Posterior vena cava (tissue), 2 donors: ENCODE measurements at regions of chr3 and their contacts with region 1.

Region 1: GRCh38 chr3:24004171-24004938 is 59.3 kb downstream of the NR1D2 start:
- DNase-seq: no peak

Region 2: GRCh38 chr3:23865595-23866450 is 138.5 kb before region 1 on chr3:
- intact Hi-C with region 1: no loop called
- DNase-seq: no peak

Region 3: DNA sequence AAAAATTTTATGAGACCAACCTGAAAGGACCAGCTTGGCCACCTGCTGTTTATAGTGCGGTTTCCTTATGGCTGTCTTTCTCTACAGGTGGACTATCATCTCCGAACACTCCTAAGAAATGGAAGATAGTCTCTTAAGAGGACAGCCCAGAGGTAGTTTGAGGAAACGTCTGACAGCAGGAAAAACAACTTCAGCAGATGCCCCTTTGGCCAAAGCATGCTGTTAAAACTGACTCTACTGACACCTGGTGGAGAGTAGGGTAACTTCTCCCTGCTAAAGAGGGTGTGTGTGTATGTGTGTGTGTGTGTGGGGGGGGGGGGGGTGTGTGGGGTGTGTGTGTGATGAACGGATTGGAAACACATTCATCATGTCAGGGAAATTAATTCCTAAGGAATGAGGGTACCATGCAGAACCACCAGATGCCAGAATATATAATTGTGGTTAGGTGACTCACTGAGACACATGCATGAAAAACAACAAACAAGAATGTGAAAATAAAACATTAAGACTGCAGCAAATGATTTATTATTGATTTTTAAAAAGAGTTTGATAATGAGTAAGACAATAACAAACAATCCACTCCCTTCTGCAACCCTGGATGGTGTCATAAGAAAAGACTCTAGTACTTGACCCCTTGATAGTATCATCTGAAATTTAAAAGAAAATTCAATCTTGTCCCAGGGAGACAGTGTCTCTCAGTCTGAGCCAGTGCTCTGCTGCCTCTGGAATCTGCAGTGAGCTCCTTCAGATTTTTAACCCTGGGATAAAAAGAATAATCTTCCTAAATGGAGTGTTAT is 233.8 kb after region 1 on chr3:
- intact Hi-C with region 1: loop called (anchors 5 kb)
- DNase-seq: no peak

Region 4: GRCh38 chr3:24662449-24663345 is 658.3 kb after region 1 on chr3:
- intact Hi-C with region 1: loop called in 1 of 2 experiments (anchors 10 kb)
- DNase-seq: no peak